ENCODE measurements at regions of chr2 and their contacts with region 1.

Region 1: GRCh38 chr2:10097352-10098148 is 17.3 kb upstream of the CYS1 start:
- DNase-seq: peak; percentile 91
- H3K4me3 ChIP-seq: no peak overlapping the region
- H3K27ac ChIP-seq: no peak overlapping the region
- H3K4me1 ChIP-seq: peaks cover 0 to 13% of the 10 kb centered on the region in 2 experiments; a peak in 1 of 4 replicates
- H3K27me3 ChIP-seq: no peaks in the 10 kb centered on the region
- CTCF ChIP-seq: peak; percentile 96
- EP300 ChIP-seq: no peak
- RAD21 ChIP-seq: peak; percentile 83

Region 2: GRCh38 chr2:10057231-10058107 is 40.1 kb before region 1 on chr2:
- CTCF ChIA-PET with region 1: interaction called, 946 read pairs
- POLR2A ChIA-PET with region 1: no interaction called
- DNase-seq: peak; percentile 58
- H3K4me3 ChIP-seq: no peak overlapping the region
- H3K27ac ChIP-seq: no peak overlapping the region
- H3K4me1 ChIP-seq: peaks cover 0 to 23% of the 10 kb centered on the region in 2 experiments; a peak in 1 of 4 replicates
- H3K27me3 ChIP-seq: no peaks in the 10 kb centered on the region
- CTCF ChIP-seq: no peak
- EP300 ChIP-seq: no peak
- RAD21 ChIP-seq: no peak

Region 3: DNA sequence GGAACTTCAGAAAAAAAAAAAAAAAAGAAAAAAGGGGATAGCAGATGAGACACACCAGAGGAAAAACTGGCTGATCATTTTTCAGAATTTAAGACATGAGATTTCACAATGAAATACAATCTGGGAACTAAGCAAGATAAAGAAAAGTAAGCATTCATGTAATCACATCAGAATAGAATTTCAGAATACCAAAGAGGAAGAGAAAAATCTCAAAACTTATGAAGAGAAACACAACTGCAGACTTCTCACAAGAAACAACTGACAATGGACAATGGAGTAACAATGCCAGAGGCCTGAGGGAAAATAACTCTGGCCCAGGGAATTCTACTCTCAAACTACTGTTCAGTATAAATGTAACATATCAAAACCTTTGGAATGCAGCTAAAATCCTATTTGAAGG is 11.8 kb after region 1 on chr2:
- CTCF ChIA-PET with region 1: interaction called, 26 read pairs
- POLR2A ChIA-PET with region 1: no interaction called
- DNase-seq: no peak
- H3K4me3 ChIP-seq: no peak overlapping the region
- H3K27ac ChIP-seq: no peak overlapping the region
- H3K4me1 ChIP-seq: no peaks in the 10 kb centered on the region
- H3K27me3 ChIP-seq: no peaks in the 10 kb centered on the region
- CTCF ChIP-seq: no peak
- EP300 ChIP-seq: no peak
- RAD21 ChIP-seq: no peak

Measured in SK-N-SH (cell line).